Activated T-helper 1 cell treated with anti-CD3 and anti-CD28 coated beads, Interleukin-12 subunit alpha, Interleukin-12 subunit beta, Interleukin-2, Interleukin-4 antibody, amounts not matched to agents 30 ng/mL and 10 ng/mL and 1 ng/mL, durations not matched to agents 14 hours and 24 hours and 36 hours (primary cell): ENCODE measurements at regions of chr17 and their contacts with region 1.

Region 1: DNA sequence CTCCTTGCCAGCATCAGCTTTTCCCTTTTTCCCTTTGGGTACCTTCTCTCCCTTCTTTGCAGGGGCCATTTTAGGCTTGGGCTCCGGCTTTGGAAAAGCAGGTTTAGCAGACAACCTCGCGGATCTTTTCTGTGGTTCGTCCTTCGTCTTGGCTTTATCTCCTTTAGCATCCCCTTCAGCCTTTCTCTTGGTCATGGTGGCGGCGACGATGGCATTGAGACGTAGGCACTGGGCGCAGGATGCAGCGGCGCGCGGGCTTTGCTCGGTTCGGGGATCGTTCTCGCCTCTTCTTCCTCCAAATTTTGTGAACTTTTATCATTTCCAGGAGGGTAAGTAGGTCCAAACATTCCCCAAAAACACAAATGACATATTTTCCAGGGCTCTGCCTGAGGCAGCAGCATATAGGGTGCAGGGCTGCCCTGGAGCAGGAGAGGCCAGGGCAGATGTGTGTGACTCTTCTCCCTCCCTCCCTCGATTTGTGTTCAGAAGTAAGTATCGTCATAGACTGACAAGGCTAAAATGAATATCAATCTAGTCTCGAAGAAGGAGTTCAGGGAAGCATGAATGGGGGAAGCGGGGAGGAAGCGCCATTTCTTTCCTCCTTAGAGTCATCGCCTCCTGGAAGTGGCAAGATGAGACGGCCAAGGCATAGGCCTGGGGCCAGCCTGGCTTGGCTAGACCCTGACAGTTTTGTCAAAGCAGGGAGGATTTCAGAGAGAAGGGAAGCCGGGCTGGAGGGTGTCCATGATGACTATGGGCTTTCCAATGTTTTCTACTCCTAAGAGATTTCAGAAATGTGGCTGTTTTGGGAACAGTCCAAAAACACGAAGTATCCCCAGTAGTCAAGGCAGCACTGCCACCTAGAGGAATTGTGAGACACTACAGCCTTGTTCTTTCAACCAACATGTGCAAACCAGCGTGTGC is 13.2 kb downstream of the CHCT1 start:
- DNase-seq: peak; percentile 25
- H3K4me3 Mint-ChIP-seq: no peak overlapping the region
- H3K27ac Mint-ChIP-seq: no peak overlapping the region
- H3K4me1 Mint-ChIP-seq: no peaks in the 10 kb centered on the region
- H3K27me3 Mint-ChIP-seq: peaks cover 2% of the 10 kb centered on the region

Region 2: DNA sequence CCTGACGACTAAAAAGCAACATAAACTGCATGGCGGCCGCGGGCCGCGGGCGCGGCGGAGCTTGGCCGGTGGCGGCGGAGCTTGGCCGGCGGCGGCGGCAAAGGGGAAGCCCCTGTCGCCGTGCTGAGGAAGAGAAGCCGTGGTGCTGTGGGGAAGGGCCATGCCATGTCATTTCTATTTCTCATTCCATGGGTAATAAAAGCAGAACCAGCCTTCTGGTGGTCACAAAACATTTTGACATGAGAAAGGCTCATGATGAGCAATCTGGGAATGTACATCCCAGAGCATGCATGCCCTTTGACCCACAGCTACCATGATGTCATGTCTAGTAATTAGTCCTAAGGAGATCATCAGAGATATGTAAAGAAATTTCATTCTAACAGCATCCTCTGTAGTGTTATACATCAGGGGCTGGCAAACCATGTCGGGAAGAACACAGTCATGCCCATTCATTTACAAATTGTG is 332.8 kb before region 1 on chr17:
- intact Hi-C with region 1: loop called (anchors 10 kb)
- DNase-seq: peak; percentile 9
- H3K4me3 Mint-ChIP-seq: peak overlapping the region; percentile 53
- H3K27ac Mint-ChIP-seq: no peak overlapping the region
- H3K4me1 Mint-ChIP-seq: peaks cover 10% of the 10 kb centered on the region
- H3K27me3 Mint-ChIP-seq: peaks cover 31% of the 10 kb centered on the region

Region 3: GRCh38 chr17:60142872-60143499 is 292.5 kb before region 1 on chr17:
- intact Hi-C with region 1: loop called (anchors 1 kb)
- DNase-seq: peak; percentile 70
- H3K4me3 Mint-ChIP-seq: peak overlapping the region; percentile 19
- H3K27ac Mint-ChIP-seq: no peak overlapping the region
- H3K4me1 Mint-ChIP-seq: peaks cover 30% of the 10 kb centered on the region
- H3K27me3 Mint-ChIP-seq: peaks cover 90% of the 10 kb centered on the region

Region 4: GRCh38 chr17:60231234-60231633 is 204.3 kb before region 1 on chr17:
- intact Hi-C with region 1: loop called (anchors 1 kb)
- DNase-seq: no peak
- H3K4me3 Mint-ChIP-seq: no peak overlapping the region
- H3K27ac Mint-ChIP-seq: no peak overlapping the region
- H3K4me1 Mint-ChIP-seq: no peaks in the 10 kb centered on the region
- H3K27me3 Mint-ChIP-seq: no peaks in the 10 kb centered on the region

Region 5: GRCh38 chr17:60421273-60421934 is 14.1 kb before region 1 on chr17:
- intact Hi-C with region 1: loop called (anchors 1 kb)
- DNase-seq: peak; percentile 63
- H3K4me3 Mint-ChIP-seq: peak overlapping the region; percentile 78
- H3K27ac Mint-ChIP-seq: peak overlapping the region; percentile 42
- H3K4me1 Mint-ChIP-seq: peaks cover 7% of the 10 kb centered on the region
- H3K27me3 Mint-ChIP-seq: peaks cover 6% of the 10 kb centered on the region